BJ (cell line): ENCODE measurements at regions of chr1 and their contacts with region 1.

Region 1: GRCh38 chr1:234309598-234310459 is 63.4 kb upstream of the COA6 start:
- DNase-seq: no peak
- H3K4me3 ChIP-seq: no peak overlapping the region
- H3K27me3 ChIP-seq: no peaks in the 10 kb centered on the region
- CTCF ChIP-seq: peak; percentile 95

Region 2: GRCh38 chr1:234114648-234115307 is 195.1 kb before region 1 on chr1:
- CTCF ChIA-PET with region 1: interaction called, 10 read pairs
- POLR2A ChIA-PET with region 1: no interaction called
- DNase-seq: no peak
- H3K4me3 ChIP-seq: no peak overlapping the region
- H3K27me3 ChIP-seq: no peaks in the 10 kb centered on the region; the same call in 1 of the 2 replicates
- CTCF ChIP-seq: peak; percentile 67

Region 3: GRCh38 chr1:234125283-234125682 is 184.5 kb before region 1 on chr1:
- CTCF ChIA-PET with region 1: interaction called, 12 read pairs
- POLR2A ChIA-PET with region 1: no interaction called
- DNase-seq: no peak
- H3K4me3 ChIP-seq: no peak overlapping the region
- H3K27me3 ChIP-seq: no peaks in the 10 kb centered on the region
- CTCF ChIP-seq: peak; percentile 40; the same call in 1 of the 2 replicates

Region 4: DNA sequence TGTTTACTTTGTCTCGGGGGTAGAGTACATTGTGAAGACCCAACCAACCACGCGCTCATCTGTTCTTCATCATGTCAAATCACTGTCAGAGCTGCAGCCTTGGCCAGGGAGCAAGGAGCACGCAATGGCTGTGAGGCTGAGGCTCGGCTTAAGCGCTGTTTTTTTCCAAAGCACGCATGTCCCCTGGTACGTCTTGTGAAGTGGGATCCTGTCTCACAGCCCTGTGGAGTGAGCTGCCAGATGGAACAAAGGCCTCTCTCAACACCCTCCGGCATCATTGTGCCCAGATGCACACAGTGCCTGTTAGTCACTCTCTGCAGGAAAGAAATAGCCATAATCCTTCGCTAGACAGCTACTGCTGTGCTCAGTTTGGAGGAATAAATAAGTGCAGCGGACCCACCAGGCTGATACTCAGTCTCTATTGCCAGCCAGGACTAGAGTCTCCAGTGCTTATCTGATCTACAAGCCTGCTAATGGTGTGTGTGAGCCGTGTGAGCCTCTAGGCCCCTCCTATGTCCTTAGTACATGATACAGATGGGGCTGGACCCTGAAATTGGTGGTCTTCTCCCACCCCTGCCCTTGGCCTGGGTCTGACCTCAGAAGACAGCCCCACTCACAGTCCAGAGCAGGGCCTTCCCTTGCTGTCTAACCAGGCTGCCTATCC is 27.9 kb before region 1 on chr1:
- CTCF ChIA-PET with region 1: interaction called, 13 read pairs
- POLR2A ChIA-PET with region 1: no interaction called
- DNase-seq: no peak
- H3K4me3 ChIP-seq: no peak overlapping the region
- H3K27me3 ChIP-seq: no peaks in the 10 kb centered on the region
- CTCF ChIP-seq: no peak

Region 5: DNA sequence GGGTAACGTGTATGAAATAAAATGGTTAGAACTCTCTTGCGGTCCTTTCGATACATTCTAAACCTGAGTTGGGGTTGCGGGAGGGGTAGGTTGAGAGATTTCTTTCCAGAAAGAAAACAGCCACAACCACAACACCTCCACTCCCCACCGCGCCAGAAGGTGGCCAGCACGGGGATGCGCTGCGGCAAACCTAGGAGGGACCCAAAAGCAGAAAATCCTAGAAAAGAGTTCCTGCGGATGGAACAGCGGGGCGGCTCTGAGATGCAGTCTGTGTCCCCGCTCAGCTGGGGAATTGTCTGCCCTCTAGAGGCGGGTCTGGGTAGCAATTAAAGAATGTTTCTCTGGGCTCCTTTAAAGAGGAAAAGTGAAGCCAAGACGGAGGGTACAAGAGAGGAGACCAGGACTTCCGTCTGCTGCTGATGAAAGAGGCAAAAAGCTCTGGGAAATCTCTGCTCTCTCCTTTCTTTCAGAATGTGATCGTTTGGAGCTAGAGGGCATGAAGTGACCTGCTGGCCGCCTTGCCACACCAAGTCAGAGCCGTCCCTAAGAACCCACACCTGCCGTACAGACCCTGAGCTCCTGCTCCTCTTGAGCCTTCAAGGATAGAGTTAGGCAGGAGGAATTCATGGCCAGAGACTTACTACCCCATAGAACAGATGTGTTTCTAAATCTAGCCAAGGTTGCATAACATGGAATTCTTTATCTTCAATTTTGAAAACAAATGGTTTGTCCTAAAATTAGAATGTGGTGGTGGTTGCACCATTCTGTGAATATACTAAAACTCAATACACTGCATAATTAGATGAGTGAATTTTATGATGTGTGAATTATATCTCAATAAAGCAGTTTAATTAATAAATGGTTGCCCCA is 16.9 kb after region 1 on chr1:
- CTCF ChIA-PET with region 1: interaction called, 18 read pairs
- POLR2A ChIA-PET with region 1: no interaction called
- DNase-seq: no peak
- H3K4me3 ChIP-seq: peak overlapping the region; percentile 26
- H3K27me3 ChIP-seq: peaks cover 4% of the 10 kb centered on the region
- CTCF ChIP-seq: peak; percentile 88

Region 6: GRCh38 chr1:234452091-234452954 is 142.5 kb after region 1 on chr1:
- CTCF ChIA-PET with region 1: no interaction called
- POLR2A ChIA-PET with region 1: no interaction called
- DNase-seq: no peak
- H3K4me3 ChIP-seq: no peak overlapping the region
- H3K27me3 ChIP-seq: no peaks in the 10 kb centered on the region
- CTCF ChIP-seq: no peak